ENCODE measurements at regions of chr6 and their contacts with region 1.

Region 1: DNA sequence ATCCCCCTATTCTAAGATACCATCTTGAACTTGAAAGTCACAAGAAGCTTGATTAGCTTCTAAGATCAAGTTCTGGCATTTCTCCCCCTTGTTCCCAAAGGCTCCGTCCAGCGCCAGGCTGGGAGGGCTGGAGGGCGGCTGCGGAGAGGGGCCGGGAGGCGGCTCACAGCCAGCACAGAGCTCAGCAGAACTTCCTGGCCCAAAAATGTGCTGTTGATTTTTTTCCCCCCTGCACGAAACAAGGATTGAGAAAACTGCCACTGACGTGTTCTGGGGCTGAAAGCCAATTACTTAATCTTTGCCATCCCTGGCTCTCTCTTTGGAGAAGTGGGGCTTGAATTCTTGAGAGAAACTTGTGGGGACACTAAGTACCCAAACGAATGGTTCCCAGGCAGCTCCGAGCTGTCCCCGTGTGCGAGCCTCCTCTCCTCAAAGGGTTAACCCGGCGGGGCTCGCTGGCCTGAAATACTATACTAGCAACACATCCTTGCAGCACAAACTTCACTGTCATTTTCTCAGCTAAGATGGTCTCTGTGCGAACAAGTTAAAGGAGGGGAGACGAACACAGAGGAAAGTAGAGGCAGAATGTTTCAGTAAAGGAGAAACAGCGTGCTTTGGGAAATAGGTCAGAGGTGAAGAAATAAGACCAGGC is 452 bp downstream of the TRAF3IP2 start:
- DNase-seq: peak; percentile 88
- H3K4me3 Mint-ChIP-seq: peak overlapping the region; percentile 90
- H3K27ac Mint-ChIP-seq: peak overlapping the region; percentile 72
- H3K4me1 Mint-ChIP-seq: peaks cover 40% of the 10 kb centered on the region
- H3K27me3 Mint-ChIP-seq: no peaks in the 10 kb centered on the region
- CTCF ChIP-seq: no peak

Region 2: GRCh38 chr6:111552241-111552744 is 52.9 kb before region 1 on chr6:
- CTCF ChIA-PET with region 1: no interaction called
- POLR2A ChIA-PET with region 1: interaction called, 28 read pairs
- intact Hi-C with region 1: loop called (anchors 10 kb)
- DNase-seq: peak; percentile 81
- H3K4me3 Mint-ChIP-seq: peak overlapping the region; percentile 28
- H3K27ac Mint-ChIP-seq: peak overlapping the region; percentile 21
- H3K4me1 Mint-ChIP-seq: peaks cover 41% of the 10 kb centered on the region
- H3K27me3 Mint-ChIP-seq: no peaks in the 10 kb centered on the region
- CTCF ChIP-seq: no peak

Region 3: DNA sequence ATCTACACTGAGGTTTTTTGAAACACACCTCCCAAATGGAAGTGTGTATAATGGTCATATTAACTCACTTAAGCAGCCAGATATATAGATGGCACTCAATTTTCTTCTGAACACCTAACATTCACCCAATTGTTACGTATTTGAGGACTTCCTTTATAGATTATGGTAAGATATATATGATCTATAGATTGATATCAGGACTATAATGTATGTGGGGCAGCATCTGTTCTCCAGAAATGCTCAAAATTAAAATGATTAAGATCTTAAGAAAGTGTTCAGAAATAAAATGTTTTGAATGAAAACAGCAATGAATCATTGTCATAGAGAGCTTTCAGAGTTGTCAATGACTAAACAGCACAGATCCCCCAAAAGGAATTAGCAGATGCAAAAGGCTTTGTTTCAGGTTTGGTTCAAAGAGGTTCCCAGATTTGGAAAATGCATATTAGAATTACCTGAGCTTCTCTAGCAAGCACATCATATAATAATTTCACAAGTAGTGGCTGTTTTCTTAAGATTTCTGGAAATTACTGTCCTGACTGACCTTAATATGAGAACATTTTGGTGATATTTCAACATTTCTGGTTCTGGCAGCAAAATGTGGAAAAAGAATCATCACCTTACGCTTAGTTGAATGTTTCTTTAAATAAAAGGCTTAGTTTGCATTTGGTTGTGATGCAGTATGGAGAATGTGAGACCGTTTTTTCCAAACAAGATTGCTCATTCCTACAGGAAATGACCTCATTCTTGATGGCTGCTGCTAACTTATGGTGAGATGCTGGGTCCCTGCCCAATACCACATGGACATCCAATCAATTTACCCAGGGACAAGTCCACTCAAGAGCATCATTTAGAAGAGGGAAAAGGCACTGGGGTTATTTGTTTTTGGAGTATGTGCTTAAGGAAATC is 31.1 kb before region 1 on chr6:
- CTCF ChIA-PET with region 1: no interaction called
- POLR2A ChIA-PET with region 1: interaction called, 52 read pairs
- intact Hi-C with region 1: loop called (anchors 2 kb)
- DNase-seq: peak; percentile 61
- H3K4me3 Mint-ChIP-seq: no peak overlapping the region
- H3K27ac Mint-ChIP-seq: peak overlapping the region; percentile 65
- H3K4me1 Mint-ChIP-seq: peaks cover 22% of the 10 kb centered on the region
- H3K27me3 Mint-ChIP-seq: no peaks in the 10 kb centered on the region
- CTCF ChIP-seq: no peak

Region 4: GRCh38 chr6:111591104-111591900 is 13.9 kb before region 1 on chr6:
- CTCF ChIA-PET with region 1: interaction called, 4 read pairs
- POLR2A ChIA-PET with region 1: interaction called, 291 read pairs
- intact Hi-C with region 1: loop called (anchors 1 kb)
- DNase-seq: peak; percentile 99
- H3K4me3 Mint-ChIP-seq: peak overlapping the region; percentile 43
- H3K27ac Mint-ChIP-seq: peak overlapping the region; percentile 87
- H3K4me1 Mint-ChIP-seq: peaks cover 53% of the 10 kb centered on the region
- H3K27me3 Mint-ChIP-seq: no peaks in the 10 kb centered on the region
- CTCF ChIP-seq: no peak

Region 5: DNA sequence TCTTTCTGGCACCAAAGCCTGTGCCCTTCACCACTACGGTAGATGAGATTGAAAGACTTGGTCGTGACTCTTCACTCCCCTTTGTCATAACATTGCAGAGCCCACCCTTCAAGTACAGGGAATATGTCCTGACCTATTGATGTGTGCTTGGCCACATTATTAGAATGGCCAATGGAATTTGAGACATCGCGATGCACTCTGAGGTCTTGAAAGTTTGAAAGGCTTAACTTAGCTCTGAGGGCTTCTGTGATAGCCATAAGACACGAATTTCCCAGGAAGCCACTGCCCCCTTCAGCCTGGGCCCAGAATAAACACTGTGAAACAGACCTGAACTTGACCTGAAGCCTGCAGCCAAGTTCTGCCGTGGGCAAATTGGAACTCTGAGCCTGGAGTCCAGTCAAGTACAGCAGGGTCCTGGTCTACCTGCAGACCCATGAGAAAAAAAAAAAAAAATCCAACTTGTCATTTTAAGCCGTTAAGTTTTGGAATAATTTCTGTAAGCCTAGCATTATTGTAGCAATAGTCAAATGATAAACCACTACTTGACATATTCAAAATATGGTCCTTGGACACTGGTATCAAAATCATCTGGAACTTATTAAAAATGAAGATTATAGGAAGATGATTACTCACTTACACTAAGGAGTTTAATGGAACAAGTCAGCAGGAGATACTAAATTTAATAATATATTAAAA is 37.4 kb after region 1 on chr6:
- CTCF ChIA-PET with region 1: interaction called, 4 read pairs
- POLR2A ChIA-PET with region 1: interaction called, 6 read pairs
- intact Hi-C with region 1: loop called (anchors 1 kb)
- DNase-seq: peak; percentile 80
- H3K4me3 Mint-ChIP-seq: no peak overlapping the region
- H3K27ac Mint-ChIP-seq: no peak overlapping the region
- H3K4me1 Mint-ChIP-seq: peaks cover 4% of the 10 kb centered on the region
- H3K27me3 Mint-ChIP-seq: no peaks in the 10 kb centered on the region
- CTCF ChIP-seq: peak; percentile 65

Measured in MCF 10A (cell line).